Activated CD4-positive, alpha-beta memory T cell treated with anti-CD3 and anti-CD28 coated beads for 36 hours (primary cell): ENCODE measurements at regions of chr11 and their contacts with region 1.

Region 1: GRCh38 chr11:107827041-107827440 is 31.5 kb downstream of the SLC35F2 start:
- DNase-seq: no peak
- H3K4me3 Mint-ChIP-seq: no peak overlapping the region
- H3K27ac Mint-ChIP-seq: no peak overlapping the region
- H3K4me1 Mint-ChIP-seq: peaks cover 16% of the 10 kb centered on the region
- H3K27me3 Mint-ChIP-seq: no peaks in the 10 kb centered on the region

Region 2: GRCh38 chr11:107840129-107840484 is 13.1 kb after region 1 on chr11:
- CTCF ChIA-PET with region 1: no interaction called
- POLR2A ChIA-PET with region 1: interaction called, 3 read pairs
- intact Hi-C with region 1: loop called (anchors 2 kb)
- DNase-seq: no peak
- H3K4me3 Mint-ChIP-seq: peak overlapping the region; percentile 53
- H3K27ac Mint-ChIP-seq: peak overlapping the region; percentile 98
- H3K4me1 Mint-ChIP-seq: peaks cover 71% of the 10 kb centered on the region
- H3K27me3 Mint-ChIP-seq: no peaks in the 10 kb centered on the region